ENCODE measurements at regions of chr1 and their contacts with region 1.

Region 1: GRCh38 chr1:212749821-212750535 is 41.6 kb downstream of the NSL1 start:
- DNase-seq: peak; percentile 27
- H3K4me3 Mint-ChIP-seq: peak overlapping the region; percentile 45
- H3K27ac Mint-ChIP-seq: peak overlapping the region; percentile 81
- H3K4me1 Mint-ChIP-seq: peaks cover 73% of the 10 kb centered on the region
- H3K27me3 Mint-ChIP-seq: no peaks in the 10 kb centered on the region

Region 2: GRCh38 chr1:212712451-212713303 is 37.3 kb before region 1 on chr1:
- CTCF ChIA-PET with region 1: interaction called, 5 read pairs
- POLR2A ChIA-PET with region 1: no interaction called
- intact Hi-C with region 1: loop called (anchors 2 kb)
- DNase-seq: peak; percentile 61
- H3K4me3 Mint-ChIP-seq: no peak overlapping the region
- H3K27ac Mint-ChIP-seq: peak overlapping the region; percentile 95
- H3K4me1 Mint-ChIP-seq: peaks cover 47% of the 10 kb centered on the region
- H3K27me3 Mint-ChIP-seq: no peaks in the 10 kb centered on the region

Region 3: GRCh38 chr1:212727386-212728181 is 22.4 kb before region 1 on chr1:
- CTCF ChIA-PET with region 1: interaction called, 25 read pairs
- POLR2A ChIA-PET with region 1: interaction called, 3 read pairs
- intact Hi-C with region 1: no loop called
- DNase-seq: peak; percentile 66
- H3K4me3 Mint-ChIP-seq: peak overlapping the region; percentile 13
- H3K27ac Mint-ChIP-seq: peak overlapping the region; percentile 92
- H3K4me1 Mint-ChIP-seq: peaks cover 66% of the 10 kb centered on the region
- H3K27me3 Mint-ChIP-seq: no peaks in the 10 kb centered on the region

Region 4: DNA sequence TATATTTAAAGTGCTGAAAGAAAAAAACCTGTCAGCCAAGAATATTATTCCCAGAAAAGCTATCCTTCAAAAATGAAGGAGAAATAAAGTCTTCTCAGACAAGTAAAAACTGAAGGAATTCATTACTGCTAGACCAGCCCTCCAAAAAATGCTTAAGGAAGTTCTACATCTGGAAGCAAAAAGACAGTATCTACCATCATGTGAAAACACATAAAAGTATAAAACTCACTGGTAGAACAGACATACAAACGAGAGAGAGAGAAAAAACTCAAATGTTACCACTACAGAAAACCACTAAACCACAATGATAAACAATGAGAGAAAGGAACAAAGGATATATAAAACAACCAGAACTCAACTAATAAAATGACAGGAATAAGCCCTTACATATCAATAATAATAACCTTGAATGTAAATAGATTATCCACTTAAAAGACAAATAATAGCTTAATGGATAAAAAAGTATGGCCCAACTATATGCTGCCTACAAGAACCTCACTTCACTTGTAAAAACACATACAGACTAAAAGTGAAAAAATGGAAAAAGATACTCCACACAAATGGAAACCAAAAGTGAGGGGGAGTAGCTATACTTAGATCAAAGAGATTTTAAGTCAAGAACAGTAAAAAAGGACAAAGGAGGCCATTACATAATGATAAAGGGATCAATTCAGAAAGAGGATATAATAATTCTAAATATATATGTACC is 19.6 kb after region 1 on chr1:
- CTCF ChIA-PET with region 1: interaction called, 13 read pairs
- POLR2A ChIA-PET with region 1: interaction called, 3 read pairs
- intact Hi-C with region 1: loop called (anchors 1 kb)
- DNase-seq: no peak
- H3K4me3 Mint-ChIP-seq: peak overlapping the region; percentile 34
- H3K27ac Mint-ChIP-seq: peak overlapping the region; percentile 30
- H3K4me1 Mint-ChIP-seq: peaks cover 55% of the 10 kb centered on the region
- H3K27me3 Mint-ChIP-seq: no peaks in the 10 kb centered on the region

Region 5: GRCh38 chr1:212994926-212995325 is 244.9 kb after region 1 on chr1:
- CTCF ChIA-PET with region 1: interaction called, 4 read pairs
- POLR2A ChIA-PET with region 1: no interaction called
- intact Hi-C with region 1: loop called (anchors 1 kb)
- DNase-seq: no peak
- H3K4me3 Mint-ChIP-seq: no peak overlapping the region
- H3K27ac Mint-ChIP-seq: no peak overlapping the region
- H3K4me1 Mint-ChIP-seq: peaks cover 10% of the 10 kb centered on the region
- H3K27me3 Mint-ChIP-seq: no peaks in the 10 kb centered on the region